ENCODE measurements at regions of chr12 and their contacts with region 1.

Region 1: GRCh38 chr12:92496790-92497189 is 206.0 kb upstream of the PLEKHG7 start:
- DNase-seq: no peak
- ATAC-seq: no peak
- H3K4me3 ChIP-seq: no peak overlapping the region
- H3K4me3 Mint-ChIP-seq: no peak overlapping the region
- H3K27ac ChIP-seq: no peak overlapping the region
- H3K27ac Mint-ChIP-seq: no peak overlapping the region
- H3K4me1 ChIP-seq: no peaks in the 10 kb centered on the region
- H3K4me1 Mint-ChIP-seq: no peaks in the 10 kb centered on the region
- H3K27me3 ChIP-seq: no peaks in the 10 kb centered on the region
- H3K27me3 Mint-ChIP-seq: no peaks in the 10 kb centered on the region
- CTCF ChIP-seq: no peak

Region 2: GRCh38 chr12:92210071-92210470 is 286.7 kb before region 1 on chr12:
- CTCF ChIA-PET with region 1: no interaction called
- POLR2A ChIA-PET with region 1: no interaction called
- intact Hi-C with region 1: no loop called
- DNase-seq: peak in 2 of 9 experiments; percentile 24 to 42
- ATAC-seq: peak; percentile 64
- H3K4me3 ChIP-seq: no peak overlapping the region
- H3K4me3 Mint-ChIP-seq: peak overlapping the region; percentile 66
- H3K27ac ChIP-seq: no peak overlapping the region
- H3K27ac Mint-ChIP-seq: peak overlapping the region; percentile 93
- H3K4me1 ChIP-seq: peaks cover 27% of the 10 kb centered on the region
- H3K4me1 Mint-ChIP-seq: peaks cover 40% of the 10 kb centered on the region
- H3K27me3 ChIP-seq: no peaks in the 10 kb centered on the region
- H3K27me3 Mint-ChIP-seq: no peaks in the 10 kb centered on the region
- CTCF ChIP-seq: no peak

Region 3: GRCh38 chr12:92516277-92516600 is 19.4 kb after region 1 on chr12:
- CTCF ChIA-PET with region 1: interaction called, 4 read pairs
- POLR2A ChIA-PET with region 1: interaction called, 4 read pairs
- intact Hi-C with region 1: loop called in 1 of 2 experiments (anchors 2 kb)
- DNase-seq: no peak
- ATAC-seq: no peak
- H3K4me3 ChIP-seq: no peak overlapping the region
- H3K4me3 Mint-ChIP-seq: no peak overlapping the region
- H3K27ac ChIP-seq: no peak overlapping the region
- H3K27ac Mint-ChIP-seq: no peak overlapping the region
- H3K4me1 ChIP-seq: no peaks in the 10 kb centered on the region
- H3K4me1 Mint-ChIP-seq: no peaks in the 10 kb centered on the region
- H3K27me3 ChIP-seq: no peaks in the 10 kb centered on the region
- H3K27me3 Mint-ChIP-seq: no peaks in the 10 kb centered on the region
- CTCF ChIP-seq: no peak

Measured in CD8-positive, alpha-beta T cell (primary cell).